Activated CD4-positive, alpha-beta T cell treated with anti-CD3 and anti-CD28 coated beads, Interleukin-2, amount 10 ng/mL, durations not matched to agents 24 days and 14 days (primary cell): ENCODE measurements at regions of chr3 and their contacts with region 1.

Region 1: GRCh38 chr3:111577794-111578685 is 17.1 kb downstream of the ZBED2 start:
- DNase-seq: peak; percentile 77
- H3K4me3 Mint-ChIP-seq: peak overlapping the region; percentile 9
- H3K27ac Mint-ChIP-seq: peak overlapping the region; percentile 77
- H3K4me1 Mint-ChIP-seq: peaks cover 68% of the 10 kb centered on the region
- H3K27me3 Mint-ChIP-seq: no peaks in the 10 kb centered on the region

Region 2: GRCh38 chr3:111547631-111548030 is 30.4 kb before region 1 on chr3:
- intact Hi-C with region 1: loop called (anchors 2 kb)
- DNase-seq: peak; percentile 87
- H3K4me3 Mint-ChIP-seq: no peak overlapping the region
- H3K27ac Mint-ChIP-seq: no peak overlapping the region
- H3K4me1 Mint-ChIP-seq: peaks cover 46% of the 10 kb centered on the region
- H3K27me3 Mint-ChIP-seq: no peaks in the 10 kb centered on the region

Region 3: GRCh38 chr3:111604119-111604518 is 26.1 kb after region 1 on chr3:
- intact Hi-C with region 1: loop called (anchors 1 kb)
- DNase-seq: peak; percentile 66
- H3K4me3 Mint-ChIP-seq: peak overlapping the region; percentile 40
- H3K27ac Mint-ChIP-seq: peak overlapping the region; percentile 91
- H3K4me1 Mint-ChIP-seq: peaks cover 74% of the 10 kb centered on the region
- H3K27me3 Mint-ChIP-seq: no peaks in the 10 kb centered on the region

Region 4: DNA sequence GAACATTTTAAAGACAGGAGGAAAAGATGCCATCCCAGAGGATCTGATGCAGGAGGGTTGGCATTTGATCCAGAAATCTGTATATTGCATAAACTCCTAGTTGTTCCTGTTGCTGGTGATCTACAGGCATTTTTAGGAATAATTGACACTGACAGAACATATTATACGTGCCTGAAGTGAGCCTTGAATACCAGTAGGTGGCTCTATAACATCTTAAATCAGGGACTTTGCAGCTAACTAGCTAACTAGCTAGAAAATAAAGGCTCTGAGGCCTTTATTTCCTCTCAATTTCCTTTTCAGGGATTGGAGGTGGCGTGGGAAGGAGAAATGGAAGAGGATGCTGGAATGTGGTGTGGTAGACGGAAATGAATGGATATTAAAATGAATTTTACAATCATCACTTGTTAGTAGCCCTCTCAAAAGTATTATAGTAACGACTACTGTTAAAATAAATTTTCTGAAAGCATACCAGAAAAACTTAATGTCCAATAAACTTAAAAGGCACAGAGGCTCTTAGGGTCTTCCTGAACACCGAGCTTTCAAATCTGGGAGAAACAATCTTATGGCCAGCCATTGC is 91.0 kb after region 1 on chr3:
- intact Hi-C with region 1: loop called (anchors 1 kb)
- DNase-seq: peak; percentile 69
- H3K4me3 Mint-ChIP-seq: peak overlapping the region; percentile 22
- H3K27ac Mint-ChIP-seq: peak overlapping the region; percentile 73
- H3K4me1 Mint-ChIP-seq: peaks cover 69% of the 10 kb centered on the region
- H3K27me3 Mint-ChIP-seq: no peaks in the 10 kb centered on the region

Region 5: GRCh38 chr3:111978493-111979433 is 400.7 kb after region 1 on chr3 and contains the start of gene ABHD10:
- intact Hi-C with region 1: loop called (anchors 5 kb)
- DNase-seq: peak; percentile 99
- H3K4me3 Mint-ChIP-seq: peak within 1 kb of the TSS; percentile 92
- H3K27ac Mint-ChIP-seq: peak within 1 kb of the TSS; percentile 93
- H3K4me1 Mint-ChIP-seq: peaks cover 36% of the 10 kb centered on the region
- H3K27me3 Mint-ChIP-seq: peaks cover 19% of the 10 kb centered on the region
- total RNA-seq, gene ABHD10: 39.5 TPM in 2 replicates